Heart right ventricle (tissue), 16 donors: ENCODE measurements at regions of chr9 and their contacts with region 1.

Region 1: DNA sequence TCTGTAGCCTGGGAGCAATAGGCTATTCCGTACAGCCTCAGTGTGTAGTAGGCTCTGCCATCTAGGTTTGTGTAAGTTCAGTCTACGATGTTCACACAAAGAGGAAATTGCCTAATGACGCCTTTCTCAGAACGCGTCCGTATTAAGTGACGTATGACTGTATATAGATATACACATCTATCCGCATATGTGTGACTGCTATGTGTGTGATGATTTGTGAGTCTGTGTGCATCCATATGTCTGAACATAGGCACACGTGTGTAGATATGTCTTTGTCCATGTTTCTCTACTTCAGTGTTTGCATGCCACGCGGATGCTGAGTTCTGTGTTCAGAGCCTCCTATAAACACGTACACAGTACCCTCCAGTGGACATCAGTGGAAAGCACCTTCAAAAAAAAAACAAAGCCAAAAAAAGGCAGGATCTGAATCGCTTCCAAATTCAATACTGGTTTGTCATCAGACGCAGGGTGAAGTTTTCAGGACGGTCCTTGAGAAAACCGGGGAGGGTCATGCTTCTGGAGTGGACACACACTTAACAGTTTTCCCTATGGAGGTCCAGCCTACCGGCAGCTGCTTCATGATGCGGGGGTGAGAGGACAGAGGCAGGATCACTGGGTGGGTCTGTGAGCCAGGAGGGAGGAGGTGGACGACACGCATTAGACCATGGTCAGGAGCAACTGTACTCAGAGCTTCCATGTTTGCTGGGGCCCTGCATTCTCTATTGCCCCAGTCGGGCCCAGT is 29.5 kb upstream of the ALDH1B1 start:
- DNase-seq: peak in 1 of 2 donors; percentile 41
- ATAC-seq: peak; percentile 70 to 88 (median 82)
- H3K4me3 ChIP-seq: peak overlapping the region in 1 of 10 donors; percentile 3
- H3K27ac ChIP-seq: no peak overlapping the region
- H3K4me1 ChIP-seq: peaks cover 0 to 7% (median 0%) of the 10 kb centered on the region in 9 donors
- H3K27me3 ChIP-seq: no peaks in the 10 kb centered on the region
- CTCF ChIP-seq: peak; percentile 14 to 77 (median 65)

Region 2: GRCh38 chr9:37732086-37732741 is 630.8 kb before region 1 on chr9:
- intact Hi-C with region 1: loop called in 1 of 10 experiments (anchors 10 kb)
- DNase-seq: no peak
- ATAC-seq: no peak
- H3K4me3 ChIP-seq: no peak overlapping the region
- H3K27ac ChIP-seq: no peak overlapping the region
- H3K4me1 ChIP-seq: no peaks in the 10 kb centered on the region
- H3K27me3 ChIP-seq: peaks cover 0 to 18% (median 0%) of the 10 kb centered on the region in 7 donors
- CTCF ChIP-seq: no peak

Region 3: GRCh38 chr9:37746848-37747753 is 615.9 kb before region 1 on chr9:
- intact Hi-C with region 1: loop called in 5 of 10 experiments (anchors 5 to 10 kb)
- DNase-seq: peak; percentile 30 to 35
- ATAC-seq: peak in 7 of 8 donors; percentile 47 to 82 (median 76)
- H3K4me3 ChIP-seq: no peak overlapping the region
- H3K27ac ChIP-seq: no peak overlapping the region
- H3K4me1 ChIP-seq: no peaks in the 10 kb centered on the region
- H3K27me3 ChIP-seq: no peaks in the 10 kb centered on the region
- CTCF ChIP-seq: peak; percentile 58 to 91 (median 85)

Region 4: GRCh38 chr9:38008168-38009034 is 354.6 kb before region 1 on chr9:
- intact Hi-C with region 1: no loop called
- DNase-seq: no peak
- ATAC-seq: peak in 6 of 8 donors; percentile 20 to 67 (median 38)
- H3K4me3 ChIP-seq: no peak overlapping the region
- H3K27ac ChIP-seq: peak overlapping the region in 7 of 10 donors; percentile 16 to 69 (median 34)
- H3K4me1 ChIP-seq: peaks cover 16 to 65% (median 47%) of the 10 kb centered on the region in 9 donors
- H3K27me3 ChIP-seq: no peaks in the 10 kb centered on the region
- CTCF ChIP-seq: no peak

Region 5: DNA sequence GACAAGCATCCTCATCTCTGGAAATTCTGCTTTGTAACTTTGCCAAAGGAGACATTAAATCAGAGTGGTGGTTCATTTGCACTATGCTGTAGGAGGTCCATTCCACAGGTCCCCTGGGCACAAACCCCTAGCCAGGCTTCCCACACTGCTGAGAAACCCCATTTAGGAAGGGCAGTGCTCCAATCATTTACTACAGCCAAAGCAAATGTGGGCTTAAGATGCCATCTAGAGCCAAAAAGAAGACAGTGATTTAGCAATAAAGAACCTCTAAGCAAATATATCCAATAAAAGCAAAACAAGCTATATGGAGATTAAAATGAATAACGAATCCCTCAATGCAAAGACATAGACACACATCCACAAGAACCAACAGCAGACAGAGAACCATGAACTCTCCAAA is 99.5 kb before region 1 on chr9:
- intact Hi-C with region 1: no loop called
- DNase-seq: no peak
- ATAC-seq: no peak
- H3K4me3 ChIP-seq: no peak overlapping the region
- H3K27ac ChIP-seq: no peak overlapping the region
- H3K4me1 ChIP-seq: no peaks in the 10 kb centered on the region
- H3K27me3 ChIP-seq: no peaks in the 10 kb centered on the region
- CTCF ChIP-seq: peak in 3 of 9 donors; percentile 11 to 27 (median 26)

Region 6: GRCh38 chr9:38417003-38417945 is 54.3 kb after region 1 on chr9:
- intact Hi-C with region 1: loop called in 1 of 10 experiments (anchors 10 kb)
- DNase-seq: no peak
- ATAC-seq: no peak
- H3K4me3 ChIP-seq: no peak overlapping the region
- H3K27ac ChIP-seq: no peak overlapping the region
- H3K4me1 ChIP-seq: no peaks in the 10 kb centered on the region
- H3K27me3 ChIP-seq: peaks cover 0 to 54% (median 31%) of the 10 kb centered on the region in 7 donors
- CTCF ChIP-seq: peak in 3 of 9 donors; percentile 25 to 42 (median 31)